Activated T-helper 2 cell treated with anti-CD3 and anti-CD28 coated beads, Interferon-gamma antibody, Interleukin-2, Interleukin-4, amounts not matched to agents 10 μg/mL and 5 μg/mL and 100 μg/mL, durations not matched to agents 14 hours and 24 hours and 36 hours (primary cell): ENCODE measurements at regions of chr2 and their contacts with region 1.

Region 1: GRCh38 chr2:63692002-63692606 is 103.3 kb downstream of the MDH1 start:
- DNase-seq: no peak
- H3K4me3 Mint-ChIP-seq: no peak overlapping the region
- H3K27ac Mint-ChIP-seq: no peak overlapping the region
- H3K4me1 Mint-ChIP-seq: no peaks in the 10 kb centered on the region
- H3K27me3 Mint-ChIP-seq: peaks cover 12% of the 10 kb centered on the region

Region 2: DNA sequence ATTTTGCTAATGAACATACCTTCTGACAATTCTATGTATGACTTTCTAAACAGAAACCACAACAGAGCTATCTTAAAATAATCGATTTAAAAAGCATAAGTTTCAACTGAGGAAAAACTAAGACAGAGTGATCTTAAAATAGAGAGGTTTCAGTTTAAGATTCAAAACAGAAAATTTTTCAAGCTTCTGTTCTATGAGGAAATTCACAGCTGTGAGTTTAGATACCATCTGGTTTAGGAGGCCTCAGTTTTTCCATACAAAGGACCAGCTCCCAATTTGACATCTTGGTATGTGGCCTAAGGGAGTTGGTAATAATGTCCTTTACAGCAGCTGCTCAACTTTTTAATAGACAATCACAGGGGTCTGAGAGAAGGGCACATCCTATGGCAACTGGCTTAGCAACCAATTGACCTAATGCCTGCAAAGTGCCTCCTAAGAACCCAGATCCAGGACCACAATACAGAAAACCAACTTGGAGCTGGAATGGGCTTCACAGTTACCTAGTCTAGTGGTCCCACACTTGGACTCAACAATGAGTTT is 63.6 kb before region 1 on chr2:
- intact Hi-C with region 1: no loop called
- DNase-seq: no peak
- H3K4me3 Mint-ChIP-seq: no peak overlapping the region
- H3K27ac Mint-ChIP-seq: no peak overlapping the region
- H3K4me1 Mint-ChIP-seq: peaks cover 7% of the 10 kb centered on the region
- H3K27me3 Mint-ChIP-seq: peaks cover 11% of the 10 kb centered on the region

Region 3: GRCh38 chr2:63712748-63713147 is 20.6 kb after region 1 on chr2:
- intact Hi-C with region 1: no loop called
- DNase-seq: no peak
- H3K4me3 Mint-ChIP-seq: no peak overlapping the region
- H3K27ac Mint-ChIP-seq: no peak overlapping the region
- H3K4me1 Mint-ChIP-seq: no peaks in the 10 kb centered on the region
- H3K27me3 Mint-ChIP-seq: peaks cover 9% of the 10 kb centered on the region

Region 4: GRCh38 chr2:63861220-63861822 is 169.2 kb after region 1 on chr2:
- intact Hi-C with region 1: loop called (anchors 1 kb)
- DNase-seq: peak; percentile 29
- H3K4me3 Mint-ChIP-seq: no peak overlapping the region
- H3K27ac Mint-ChIP-seq: no peak overlapping the region
- H3K4me1 Mint-ChIP-seq: peaks cover 54% of the 10 kb centered on the region
- H3K27me3 Mint-ChIP-seq: no peaks in the 10 kb centered on the region

Region 5: GRCh38 chr2:63888490-63889402 is 196.6 kb after region 1 on chr2:
- intact Hi-C with region 1: loop called (anchors 2 kb)
- DNase-seq: peak; percentile 21
- H3K4me3 Mint-ChIP-seq: no peak overlapping the region
- H3K27ac Mint-ChIP-seq: peak overlapping the region; percentile 19
- H3K4me1 Mint-ChIP-seq: peaks cover 8% of the 10 kb centered on the region
- H3K27me3 Mint-ChIP-seq: no peaks in the 10 kb centered on the region